HAP-1 (cell line): ENCODE measurements at regions of chr13 and their contacts with region 1.

Region 1: DNA sequence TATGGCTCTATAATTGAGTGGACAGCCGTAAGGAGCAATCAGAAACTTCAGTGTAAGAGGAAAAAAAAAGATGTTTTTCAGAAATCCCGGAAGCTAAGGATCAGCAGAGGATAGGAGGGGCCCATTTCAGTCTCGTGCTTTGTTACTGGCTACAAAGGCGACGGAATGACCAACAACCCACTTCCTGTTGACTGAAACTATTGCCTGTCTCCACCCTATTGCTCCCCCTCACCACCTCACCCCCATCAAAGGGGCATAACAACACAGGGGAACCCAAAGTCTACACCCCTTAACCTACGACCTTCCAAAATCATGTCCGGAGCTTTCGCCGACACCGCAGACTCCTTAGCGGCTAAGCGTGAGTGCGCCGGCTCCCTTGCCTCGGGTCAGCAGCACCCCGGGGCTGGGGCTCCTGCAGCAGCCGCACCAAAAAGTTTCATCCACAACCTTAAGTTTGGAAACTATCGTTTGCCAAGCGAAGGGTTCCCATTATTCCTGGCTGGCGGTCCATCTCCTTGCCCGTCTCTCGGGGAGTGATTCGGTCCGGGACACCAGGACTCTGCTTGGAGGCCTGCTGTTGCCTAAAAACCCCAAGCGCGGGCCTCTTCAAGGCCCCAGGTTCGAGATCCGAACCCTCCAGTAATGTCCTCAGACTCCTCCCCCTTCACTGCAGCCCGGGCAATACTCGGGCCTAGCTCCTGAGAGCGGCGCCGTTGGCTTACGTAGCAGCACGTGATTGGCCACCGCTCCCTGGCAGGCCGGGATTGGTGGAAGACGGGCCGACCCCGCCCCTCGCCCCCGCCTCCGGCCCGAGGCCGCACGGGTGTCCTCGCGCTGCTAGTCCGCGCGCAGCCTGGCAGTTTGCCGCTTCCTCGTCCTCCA is at the start of gene TPP2:
- DNase-seq: peak; percentile 92 to 98
- H3K4me3 ChIP-seq: peak within 1 kb of the TSS; percentile 61
- H3K4me1 ChIP-seq: peaks cover 21% of the 10 kb centered on the region
- H3K27me3 ChIP-seq: no peaks in the 10 kb centered on the region

Region 2: GRCh38 chr13:101959016-101959415 is 637.4 kb before region 1 on chr13:
- in situ Hi-C with region 1: no loop called
- DNase-seq: no peak
- H3K4me3 ChIP-seq: no peak overlapping the region
- H3K4me1 ChIP-seq: no peaks in the 10 kb centered on the region
- H3K27me3 ChIP-seq: no peaks in the 10 kb centered on the region

Region 3: GRCh38 chr13:102773441-102774215 is 177.2 kb after region 1 on chr13 and contains the start of gene TEX30:
- in situ Hi-C with region 1: loop called (anchors 5 kb)
- DNase-seq: peak; percentile 81 to 88
- H3K4me3 ChIP-seq: peak within 1 kb of the TSS; percentile 78
- H3K4me1 ChIP-seq: peaks cover 20% of the 10 kb centered on the region
- H3K27me3 ChIP-seq: no peaks in the 10 kb centered on the region

Region 4: DNA sequence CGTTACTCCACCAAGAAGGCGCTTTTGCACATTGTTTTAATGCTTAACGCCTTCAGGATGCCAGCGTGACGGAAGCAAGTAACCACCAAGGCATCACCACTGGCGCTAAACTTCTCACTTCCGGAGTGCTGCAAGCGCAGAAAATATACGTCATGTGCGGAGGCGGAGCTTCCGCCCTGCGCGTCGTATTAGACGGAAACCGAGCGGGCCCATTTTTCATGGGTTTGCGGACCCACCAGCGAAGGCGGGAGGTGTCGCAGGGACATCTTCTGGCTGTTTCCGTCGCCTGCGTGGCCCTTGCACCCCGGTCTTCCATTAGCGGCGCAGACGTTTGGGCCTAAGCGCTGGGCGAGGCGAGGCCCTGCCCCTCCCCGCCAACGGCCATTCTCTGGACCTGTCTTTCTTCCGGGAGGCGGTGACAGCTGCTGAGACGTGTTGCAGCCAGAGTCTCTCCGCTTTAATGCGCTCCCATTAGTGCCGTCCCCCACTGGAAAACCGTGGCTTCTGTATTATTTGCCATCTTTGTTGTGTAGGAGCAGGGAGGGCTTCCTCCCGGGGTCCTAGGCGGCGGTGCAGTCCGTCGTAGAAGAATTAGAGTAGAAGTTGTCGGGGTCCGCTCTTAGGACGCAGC is 249.4 kb after region 1 on chr13 and contains the start of gene ERCC5:
- in situ Hi-C with region 1: loop called (anchors 5 kb)
- DNase-seq: peak; percentile 84 to 94
- H3K4me3 ChIP-seq: peak within 1 kb of the TSS; percentile 78
- H3K4me1 ChIP-seq: peaks cover 10% of the 10 kb centered on the region
- H3K27me3 ChIP-seq: no peaks in the 10 kb centered on the region

Region 5: GRCh38 chr13:103031332-103031873 is 435.0 kb after region 1 on chr13:
- in situ Hi-C with region 1: no loop called
- DNase-seq: no peak
- H3K4me3 ChIP-seq: no peak overlapping the region
- H3K4me1 ChIP-seq: no peaks in the 10 kb centered on the region
- H3K27me3 ChIP-seq: no peaks in the 10 kb centered on the region